GM10248 (cell line): ENCODE measurements at regions of chr1 and their contacts with region 1.

Region 1: GRCh38 chr1:43946236-43947060 is at the start of gene IPO13:
- DNase-seq: peak; percentile 99
- CTCF ChIP-seq: peak; percentile 92

Region 2: GRCh38 chr1:43958351-43959255 is 12.2 kb after region 1 on chr1:
- CTCF ChIA-PET with region 1: interaction called, 12 read pairs
- POLR2A ChIA-PET with region 1: interaction called, 4 read pairs
- DNase-seq: no peak
- CTCF ChIP-seq: no peak

Region 3: GRCh38 chr1:43968348-43968948 is 22.0 kb after region 1 on chr1:
- CTCF ChIA-PET with region 1: interaction called, 13 read pairs
- POLR2A ChIA-PET with region 1: interaction called, 4 read pairs
- DNase-seq: no peak
- CTCF ChIP-seq: no peak

Region 4: GRCh38 chr1:43974443-43975248 is 28.2 kb after region 1 on chr1 and contains the start of gene ATP6V0B:
- CTCF ChIA-PET with region 1: interaction called, 10 read pairs
- POLR2A ChIA-PET with region 1: no interaction called
- DNase-seq: peak; percentile 97
- CTCF ChIP-seq: peak; percentile 20

Region 5: DNA sequence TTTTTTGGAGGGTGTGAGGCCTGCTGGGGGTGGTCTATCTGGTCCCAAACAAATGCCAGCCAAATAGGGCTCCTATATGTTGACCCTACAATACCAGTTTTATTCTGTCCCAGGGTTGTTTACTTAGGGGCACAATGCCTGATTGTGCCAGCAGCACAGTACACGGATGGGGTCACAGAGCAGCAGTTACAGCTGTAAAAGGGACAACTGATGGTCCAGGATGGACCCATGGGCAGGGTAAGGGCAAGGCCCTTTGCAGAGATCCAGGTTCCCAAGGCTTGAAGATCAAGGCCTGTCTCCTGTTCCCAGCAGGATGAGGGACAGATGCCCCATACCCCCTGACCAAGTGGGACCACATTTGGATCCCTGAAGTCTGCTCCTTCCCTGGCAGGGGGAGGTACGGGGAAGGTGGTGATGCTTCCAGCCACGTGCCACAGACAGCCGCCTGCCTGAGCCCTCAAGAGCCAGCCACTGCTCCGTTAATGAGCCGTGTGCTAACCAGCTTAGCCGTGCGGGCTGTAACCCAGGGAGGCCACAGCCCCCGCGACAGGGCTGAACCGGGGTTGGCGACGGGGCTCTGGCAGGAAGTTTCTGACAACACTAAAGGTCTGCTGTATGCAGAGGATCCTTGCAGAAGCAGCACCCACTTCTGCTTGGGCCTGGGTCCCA is 66.6 kb after region 1 on chr1:
- CTCF ChIA-PET with region 1: no interaction called
- POLR2A ChIA-PET with region 1: no interaction called
- DNase-seq: no peak
- CTCF ChIP-seq: no peak